ENCODE measurements at regions of chr9 and their contacts with region 1.

Region 1: GRCh38 chr9:101458955-101459631 is 23.5 kb upstream of the ALDOB start:
- DNase-seq: peak in 4 of 35 experiments; percentile 3 to 57 (median 4)
- ATAC-seq: peak; percentile 48 to 79 (median 68)
- H3K4me3 ChIP-seq: no peak overlapping the region
- H3K4me3 Mint-ChIP-seq: no peak overlapping the region
- H3K27ac ChIP-seq: no peak overlapping the region
- H3K27ac Mint-ChIP-seq: no peak overlapping the region
- H3K4me1 ChIP-seq: no peaks in the 10 kb centered on the region
- H3K4me1 Mint-ChIP-seq: no peaks in the 10 kb centered on the region
- H3K27me3 ChIP-seq: peaks cover 2 to 3% of the 10 kb centered on the region in 2 experiments
- H3K27me3 Mint-ChIP-seq: peaks cover 7 to 14% of the 10 kb centered on the region in 2 donors

Region 2: GRCh38 chr9:100813871-100814270 is 645.2 kb before region 1 on chr9:
- CTCF ChIA-PET with region 1: no interaction called
- POLR2A ChIA-PET with region 1: no interaction called
- DNase-seq: no peak
- ATAC-seq: no peak
- H3K4me3 ChIP-seq: no peak overlapping the region
- H3K4me3 Mint-ChIP-seq: no peak overlapping the region
- H3K27ac ChIP-seq: no peak overlapping the region
- H3K27ac Mint-ChIP-seq: no peak overlapping the region
- H3K4me1 ChIP-seq: no peaks in the 10 kb centered on the region
- H3K4me1 Mint-ChIP-seq: no peaks in the 10 kb centered on the region
- H3K27me3 ChIP-seq: peaks cover 0 to 4% of the 10 kb centered on the region in 2 experiments
- H3K27me3 Mint-ChIP-seq: no peaks in the 10 kb centered on the region

Region 3: GRCh38 chr9:101533334-101534107 is 74.4 kb after region 1 on chr9 and contains the start of gene RNF20:
- CTCF ChIA-PET with region 1: interaction called, 5 to 16 read pairs
- POLR2A ChIA-PET with region 1: no interaction called
- DNase-seq: peak; percentile 97 to 100 (median 99)
- ATAC-seq: peak; percentile 94 to 95 (median 94)
- H3K4me3 ChIP-seq: peak within 1 kb of the TSS; percentile 96 to 100
- H3K4me3 Mint-ChIP-seq: peak within 1 kb of the TSS; percentile 92 to 98 (median 97)
- H3K27ac ChIP-seq: peak within 1 kb of the TSS; percentile 98
- H3K27ac Mint-ChIP-seq: peak within 1 kb of the TSS; percentile 95 to 100
- H3K4me1 ChIP-seq: peaks cover 15 to 17% of the 10 kb centered on the region in 2 experiments
- H3K4me1 Mint-ChIP-seq: peaks cover 16 to 17% (median 17%) of the 10 kb centered on the region in 3 donors
- H3K27me3 ChIP-seq: peaks cover 0 to 3% of the 10 kb centered on the region in 2 experiments
- H3K27me3 Mint-ChIP-seq: peaks cover 2 to 4% of the 10 kb centered on the region in 2 donors
- total RNA-seq, gene RNF20: 36.8 to 53.4 (median 42.5) TPM